WTC11 (cell line): ENCODE measurements at regions of chr1 and their contacts with region 1.

Region 1: GRCh38 chr1:38489844-38490270 is 369.7 kb downstream of the RRAGC start:
- DNase-seq: peak; percentile 95
- ATAC-seq: peak; percentile 96
- H3K4me3 Mint-ChIP-seq: no peak overlapping the region
- H3K27ac Mint-ChIP-seq: peak overlapping the region; percentile 92
- H3K4me1 Mint-ChIP-seq: peaks cover 55% of the 10 kb centered on the region
- H3K27me3 Mint-ChIP-seq: no peaks in the 10 kb centered on the region; the same call in none of the 2 replicates
- CTCF ChIP-seq: peak; percentile 87

Region 2: GRCh38 chr1:38026592-38027200 is 463.2 kb before region 1 on chr1:
- CTCF ChIA-PET with region 1: interaction called, 10 read pairs
- POLR2A ChIA-PET with region 1: no interaction called
- DNase-seq: peak; percentile 74
- ATAC-seq: peak; percentile 19
- H3K4me3 Mint-ChIP-seq: no peak overlapping the region
- H3K27ac Mint-ChIP-seq: peak overlapping the region; percentile 57; the same call in 1 of the 2 replicates
- H3K4me1 Mint-ChIP-seq: peaks cover 54% of the 10 kb centered on the region
- H3K27me3 Mint-ChIP-seq: no peaks in the 10 kb centered on the region
- CTCF ChIP-seq: peak; percentile 62

Region 3: GRCh38 chr1:38285807-38286530 is 203.9 kb before region 1 on chr1:
- CTCF ChIA-PET with region 1: no interaction called
- POLR2A ChIA-PET with region 1: no interaction called
- DNase-seq: peak; percentile 38
- ATAC-seq: peak; percentile 78
- H3K4me3 Mint-ChIP-seq: no peak overlapping the region
- H3K27ac Mint-ChIP-seq: no peak overlapping the region
- H3K4me1 Mint-ChIP-seq: peaks cover 48% of the 10 kb centered on the region
- H3K27me3 Mint-ChIP-seq: no peaks in the 10 kb centered on the region; the same call in 1 of the 2 replicates
- CTCF ChIP-seq: no peak

Region 4: DNA sequence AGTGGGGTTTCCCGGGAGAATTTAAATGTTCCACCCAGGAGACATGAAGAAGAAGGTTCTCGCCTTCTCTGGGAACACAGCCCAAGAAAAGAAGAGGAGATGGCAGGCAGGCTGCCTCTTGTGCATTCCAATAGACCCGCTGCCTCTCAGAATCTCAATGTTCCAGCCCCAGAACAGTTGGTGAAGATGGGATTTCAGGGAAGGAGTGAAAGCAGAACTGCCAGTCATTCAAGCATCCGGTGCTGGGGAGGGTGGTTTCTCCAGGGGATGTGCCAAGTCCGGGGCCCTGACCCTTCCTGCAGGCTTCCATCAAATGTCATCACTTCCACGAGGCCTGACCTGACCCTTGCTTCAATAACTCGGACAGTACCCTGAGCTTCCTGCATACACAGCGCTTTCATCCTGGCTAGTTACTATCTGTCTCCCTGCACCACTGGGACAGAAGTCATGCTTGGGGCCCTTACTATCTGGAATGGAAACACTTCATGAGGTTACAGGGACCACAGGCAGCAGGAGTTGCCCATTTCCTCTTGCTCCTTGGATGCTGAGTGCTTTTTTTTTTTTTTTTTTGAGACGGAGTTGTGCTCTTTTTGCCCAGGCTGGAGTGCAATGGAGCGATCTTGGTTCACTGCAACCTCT is 56.7 kb before region 1 on chr1:
- CTCF ChIA-PET with region 1: interaction called, 26 read pairs
- POLR2A ChIA-PET with region 1: interaction called, 3 read pairs
- DNase-seq: no peak
- ATAC-seq: peak; percentile 25
- H3K4me3 Mint-ChIP-seq: 0 out of 2 replicates have a peak overlapping the region, but pooled peaks have one; percentile 5
- H3K27ac Mint-ChIP-seq: peak overlapping the region; percentile 33; the same call in 1 of the 2 replicates
- H3K4me1 Mint-ChIP-seq: peaks cover 46% of the 10 kb centered on the region
- H3K27me3 Mint-ChIP-seq: no peaks in the 10 kb centered on the region
- CTCF ChIP-seq: no peak

Region 5: DNA sequence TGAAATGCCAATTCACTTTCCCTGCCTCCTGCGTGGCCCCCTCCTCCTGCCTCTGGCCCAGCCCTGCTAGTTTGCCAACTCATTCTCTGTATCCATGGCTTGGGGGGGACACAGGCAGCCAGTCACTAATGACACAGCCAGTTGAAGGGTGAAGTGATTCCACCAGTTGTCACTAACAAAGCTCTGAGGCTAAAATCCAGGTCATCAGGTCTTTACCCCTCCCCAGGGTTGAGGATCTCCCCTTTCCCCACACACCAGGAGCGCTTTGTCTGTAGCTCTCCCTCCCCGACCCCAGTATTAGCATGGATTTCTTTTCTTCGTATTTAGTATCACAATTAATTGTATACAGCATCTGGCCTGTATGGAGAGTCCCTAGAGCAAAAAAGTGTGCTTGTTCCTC is 24.4 kb before region 1 on chr1:
- CTCF ChIA-PET with region 1: interaction called, 12 read pairs
- POLR2A ChIA-PET with region 1: no interaction called
- DNase-seq: no peak
- ATAC-seq: no peak
- H3K4me3 Mint-ChIP-seq: no peak overlapping the region
- H3K27ac Mint-ChIP-seq: peak overlapping the region; percentile 61
- H3K4me1 Mint-ChIP-seq: peaks cover 23% of the 10 kb centered on the region
- H3K27me3 Mint-ChIP-seq: peaks cover 7% of the 10 kb centered on the region
- CTCF ChIP-seq: no peak

Region 6: GRCh38 chr1:38474738-38475623 is 14.9 kb before region 1 on chr1:
- CTCF ChIA-PET with region 1: interaction called, 24 read pairs
- POLR2A ChIA-PET with region 1: interaction called, 5 read pairs
- DNase-seq: no peak
- ATAC-seq: peak; percentile 14
- H3K4me3 Mint-ChIP-seq: peak overlapping the region; percentile 78
- H3K27ac Mint-ChIP-seq: peak overlapping the region; percentile 95
- H3K4me1 Mint-ChIP-seq: peaks cover 31% of the 10 kb centered on the region
- H3K27me3 Mint-ChIP-seq: peaks cover 30% of the 10 kb centered on the region
- CTCF ChIP-seq: no peak

Region 7: GRCh38 chr1:38512789-38513188 is 22.9 kb after region 1 on chr1:
- CTCF ChIA-PET with region 1: interaction called, 12 read pairs
- POLR2A ChIA-PET with region 1: no interaction called
- DNase-seq: no peak
- ATAC-seq: no peak
- H3K4me3 Mint-ChIP-seq: no peak overlapping the region
- H3K27ac Mint-ChIP-seq: no peak overlapping the region
- H3K4me1 Mint-ChIP-seq: peaks cover 30% of the 10 kb centered on the region
- H3K27me3 Mint-ChIP-seq: no peaks in the 10 kb centered on the region
- CTCF ChIP-seq: no peak

Region 8: GRCh38 chr1:38527373-38527966 is 37.6 kb after region 1 on chr1:
- CTCF ChIA-PET with region 1: interaction called, 13 read pairs
- POLR2A ChIA-PET with region 1: no interaction called
- DNase-seq: peak; percentile 26
- ATAC-seq: peak; percentile 43; the same call in 1 of the 2 replicates
- H3K4me3 Mint-ChIP-seq: no peak overlapping the region
- H3K27ac Mint-ChIP-seq: no peak overlapping the region
- H3K4me1 Mint-ChIP-seq: peaks cover 8% of the 10 kb centered on the region; the same call in 1 of the 2 replicates
- H3K27me3 Mint-ChIP-seq: no peaks in the 10 kb centered on the region; the same call in 1 of the 2 replicates
- CTCF ChIP-seq: no peak

Region 9: GRCh38 chr1:38624336-38625039 is 134.6 kb after region 1 on chr1:
- CTCF ChIA-PET with region 1: no interaction called
- POLR2A ChIA-PET with region 1: no interaction called
- DNase-seq: no peak
- ATAC-seq: no peak
- H3K4me3 Mint-ChIP-seq: no peak overlapping the region
- H3K27ac Mint-ChIP-seq: no peak overlapping the region
- H3K4me1 Mint-ChIP-seq: peaks cover 17% of the 10 kb centered on the region
- H3K27me3 Mint-ChIP-seq: peaks cover 13% of the 10 kb centered on the region
- CTCF ChIP-seq: no peak